ENCODE measurements at regions of chr14 and their contacts with region 1.

Region 1: DNA sequence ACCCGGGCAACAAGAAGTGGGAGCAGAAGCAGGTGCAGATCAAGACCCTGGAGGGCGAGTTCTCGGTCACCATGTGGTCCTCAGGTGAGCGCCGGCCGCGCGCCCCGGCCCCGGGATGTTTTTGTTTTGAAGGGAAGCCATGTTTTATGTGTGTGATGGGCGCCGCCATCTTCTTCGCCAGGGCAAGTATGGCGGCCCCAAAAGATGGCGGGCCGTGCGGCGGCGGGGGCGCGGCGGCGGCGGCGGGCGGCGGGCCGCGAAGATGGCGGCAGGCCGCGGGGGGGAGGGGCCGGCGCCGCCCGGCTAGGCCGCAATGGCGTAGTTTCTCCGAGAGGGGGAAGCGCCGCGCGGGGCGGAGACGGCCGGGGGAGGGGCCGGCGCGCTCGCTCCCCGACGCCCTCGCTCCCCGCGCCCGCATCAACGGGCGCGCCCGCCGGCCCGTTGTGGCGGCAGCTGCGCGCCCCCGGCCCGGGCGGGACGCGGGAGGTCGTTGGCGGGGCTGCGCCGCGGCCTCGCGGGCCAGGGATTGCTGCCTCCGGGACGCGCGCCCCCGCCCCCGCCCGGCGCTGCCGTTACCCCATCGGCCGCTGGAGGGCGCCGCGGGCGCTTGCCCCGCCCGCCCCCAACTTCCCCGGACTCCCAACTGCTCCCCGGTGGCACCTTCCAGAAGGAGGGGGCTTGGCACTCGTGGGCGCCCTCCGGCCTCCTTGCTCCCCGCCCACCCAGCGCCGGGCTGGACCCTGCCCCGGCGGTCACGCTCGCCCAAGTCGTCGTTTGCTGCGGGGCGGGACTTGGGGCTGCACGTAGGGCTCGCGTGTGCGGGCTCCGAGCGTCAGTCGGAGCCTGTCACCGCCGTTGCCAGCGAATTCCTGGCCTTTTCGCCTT is 1.1 kb downstream of the YY1 start:
- DNase-seq: peak; percentile 93
- ATAC-seq: peak; percentile 40
- H3K4me3 Mint-ChIP-seq: peak overlapping the region; percentile 97
- H3K27ac Mint-ChIP-seq: peak overlapping the region; percentile 88
- H3K4me1 Mint-ChIP-seq: peaks cover 54% of the 10 kb centered on the region
- H3K27me3 Mint-ChIP-seq: no peaks in the 10 kb centered on the region

Region 2: DNA sequence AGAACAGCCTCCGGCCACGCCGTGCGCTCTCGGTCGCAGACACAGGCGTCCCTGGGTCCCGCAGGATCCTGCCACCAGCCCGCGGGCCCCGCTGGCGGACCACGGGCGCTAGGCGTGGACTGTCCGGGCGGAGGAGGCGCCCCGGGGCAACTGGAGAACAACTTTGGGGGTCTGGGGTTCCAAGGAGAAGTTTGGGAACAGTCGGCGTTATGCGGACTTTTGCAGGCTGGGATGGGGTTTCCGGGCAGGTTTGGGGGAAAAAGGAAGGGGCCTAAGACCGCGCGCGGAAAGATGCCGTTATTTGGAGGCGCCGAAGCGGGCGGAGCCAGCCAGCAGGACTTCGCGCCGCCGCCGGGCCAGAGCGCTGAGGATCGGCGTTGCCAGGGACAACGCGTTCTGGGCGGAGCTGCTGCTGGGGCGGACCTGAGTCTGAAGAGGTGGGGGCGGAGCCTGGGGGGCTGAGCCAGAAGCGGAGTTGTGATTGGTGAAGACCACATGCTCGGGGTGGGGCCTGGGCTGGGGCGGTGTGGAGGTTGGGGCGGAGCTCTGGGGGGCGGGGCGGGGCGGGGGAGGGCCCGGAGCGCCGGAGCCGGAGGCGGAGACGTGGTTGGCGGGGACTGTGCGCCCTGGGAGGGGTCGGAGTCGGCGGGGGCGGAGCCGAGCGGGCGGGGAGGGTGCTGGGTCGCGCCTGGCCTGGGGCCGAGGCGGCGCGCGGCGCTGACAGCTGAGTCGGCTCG is 556.3 kb before region 1 on chr14 and contains the start of gene CYP46A1:
- CTCF ChIA-PET with region 1: no interaction called
- POLR2A ChIA-PET with region 1: no interaction called
- intact Hi-C with region 1: loop called in 1 of 2 experiments (anchors 1 kb)
- DNase-seq: peak; percentile 100
- ATAC-seq: peak; percentile 97
- H3K4me3 Mint-ChIP-seq: peak within 1 kb of the TSS; percentile 86
- H3K27ac Mint-ChIP-seq: peak within 1 kb of the TSS; percentile 73
- H3K4me1 Mint-ChIP-seq: peaks cover 10% of the 10 kb centered on the region
- H3K27me3 Mint-ChIP-seq: peaks cover 9% of the 10 kb centered on the region
- total RNA-seq, gene CYP46A1: 0.05 to 0.23 TPM

Region 3: GRCh38 chr14:100108042-100108825 is 131.8 kb before region 1 on chr14:
- CTCF ChIA-PET with region 1: no interaction called
- POLR2A ChIA-PET with region 1: no interaction called
- intact Hi-C with region 1: loop called in 1 of 2 experiments (anchors 5 kb)
- DNase-seq: peak; percentile 94
- ATAC-seq: peak; percentile 53
- H3K4me3 Mint-ChIP-seq: no peak overlapping the region
- H3K27ac Mint-ChIP-seq: peak overlapping the region; percentile 92
- H3K4me1 Mint-ChIP-seq: peaks cover 74% of the 10 kb centered on the region
- H3K27me3 Mint-ChIP-seq: no peaks in the 10 kb centered on the region

Region 4: DNA sequence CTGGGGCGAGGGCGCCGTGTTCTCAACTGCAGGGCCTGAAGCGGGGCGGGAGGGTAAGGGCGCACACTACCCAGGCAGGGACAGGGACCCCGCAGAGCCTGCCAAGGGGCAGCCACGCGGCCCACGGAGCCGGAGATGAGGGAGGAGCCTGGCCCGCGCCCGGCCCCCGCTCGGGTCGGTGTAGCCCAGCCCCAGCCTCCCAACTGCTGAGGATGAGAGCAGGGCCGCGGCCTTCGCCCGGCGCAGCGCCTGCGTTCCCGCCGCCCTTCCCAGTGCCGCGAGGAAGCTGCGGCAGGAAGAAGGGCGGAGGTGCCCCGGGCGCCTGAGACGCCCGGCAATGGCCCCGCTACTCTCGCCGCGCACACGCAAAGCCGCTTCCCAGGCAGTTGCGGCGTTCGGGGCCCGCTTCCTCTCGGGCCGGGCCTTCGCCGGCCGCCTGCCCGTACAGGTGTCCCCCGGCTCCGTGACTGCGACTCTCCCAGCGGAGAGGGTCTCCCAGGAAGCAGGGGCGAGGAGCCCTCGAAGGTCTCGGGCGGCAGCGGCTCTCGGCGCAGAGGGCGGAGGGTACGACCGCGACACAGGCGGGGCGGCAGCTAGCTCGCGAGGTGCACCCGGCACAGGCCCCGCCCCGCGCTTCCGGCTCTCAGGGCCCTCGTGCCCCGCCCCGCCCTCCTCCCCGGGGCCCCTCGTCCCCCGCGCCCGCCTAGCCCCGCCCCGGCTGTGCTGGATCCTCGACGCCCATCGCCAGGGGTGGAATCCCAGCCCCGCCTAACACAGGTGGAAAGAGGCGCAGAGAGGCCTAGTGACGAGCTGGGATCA is 25.9 kb before region 1 on chr14:
- CTCF ChIA-PET with region 1: interaction called, 31 read pairs
- POLR2A ChIA-PET with region 1: interaction called, 6 read pairs
- intact Hi-C with region 1: loop called in 1 of 2 experiments (anchors 1 kb)
- DNase-seq: peak; percentile 97
- ATAC-seq: peak; percentile 96
- H3K4me3 Mint-ChIP-seq: peak overlapping the region; percentile 79
- H3K27ac Mint-ChIP-seq: peak overlapping the region; percentile 87
- H3K4me1 Mint-ChIP-seq: peaks cover 23% of the 10 kb centered on the region
- H3K27me3 Mint-ChIP-seq: no peaks in the 10 kb centered on the region

Region 5: DNA sequence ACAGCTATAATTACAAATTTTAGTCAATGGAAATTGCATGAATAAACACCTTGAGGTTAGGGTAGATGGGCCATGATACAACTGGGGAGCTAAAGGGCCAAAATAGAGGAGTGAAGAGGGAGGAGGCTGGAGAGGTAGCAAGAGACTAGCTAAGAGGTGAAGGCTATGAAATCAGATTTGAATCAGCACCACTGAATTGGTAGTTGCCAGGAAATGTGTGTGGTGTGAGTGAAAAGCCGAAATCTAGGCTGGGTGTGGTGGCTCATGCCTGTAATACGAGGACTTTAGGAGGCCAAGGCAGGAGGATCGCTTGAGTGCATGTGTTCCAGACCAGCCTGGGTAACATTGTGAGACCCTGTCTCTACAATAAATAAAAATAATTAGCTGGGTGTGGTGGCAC is 21.5 kb after region 1 on chr14:
- CTCF ChIA-PET with region 1: interaction called, 12 read pairs
- POLR2A ChIA-PET with region 1: interaction called, 3 read pairs
- intact Hi-C with region 1: loop called in 1 of 2 experiments (anchors 1 kb)
- DNase-seq: peak; percentile 70
- ATAC-seq: peak; percentile 95
- H3K4me3 Mint-ChIP-seq: no peak overlapping the region
- H3K27ac Mint-ChIP-seq: peak overlapping the region; percentile 82
- H3K4me1 Mint-ChIP-seq: peaks cover 87% of the 10 kb centered on the region
- H3K27me3 Mint-ChIP-seq: no peaks in the 10 kb centered on the region

Region 6: GRCh38 chr14:100297302-100298300 is 57.5 kb after region 1 on chr14:
- CTCF ChIA-PET with region 1: no interaction called
- POLR2A ChIA-PET with region 1: no interaction called
- intact Hi-C with region 1: no loop called
- DNase-seq: no peak
- ATAC-seq: no peak
- H3K4me3 Mint-ChIP-seq: no peak overlapping the region
- H3K27ac Mint-ChIP-seq: no peak overlapping the region
- H3K4me1 Mint-ChIP-seq: peaks cover 3% of the 10 kb centered on the region
- H3K27me3 Mint-ChIP-seq: no peaks in the 10 kb centered on the region

Region 7: GRCh38 chr14:100375963-100376735 is 136.1 kb after region 1 on chr14:
- CTCF ChIA-PET with region 1: interaction called, 4 read pairs
- POLR2A ChIA-PET with region 1: interaction called, 6 read pairs
- intact Hi-C with region 1: loop called (anchors 1 kb)
- DNase-seq: peak; percentile 96
- ATAC-seq: peak; percentile 70
- H3K4me3 Mint-ChIP-seq: peak within 1 kb of the TSS; percentile 99
- H3K27ac Mint-ChIP-seq: peak within 1 kb of the TSS; percentile 98
- H3K4me1 Mint-ChIP-seq: peaks cover 37% of the 10 kb centered on the region
- H3K27me3 Mint-ChIP-seq: no peaks in the 10 kb centered on the region

Measured in activated CD4-positive, alpha-beta T cell treated with anti-CD3 and anti-CD28 coated beads for 36 hours (primary cell).